HCT116 (cell line): ENCODE measurements at regions of chr11 and their contacts with region 1.

Region 1: DNA sequence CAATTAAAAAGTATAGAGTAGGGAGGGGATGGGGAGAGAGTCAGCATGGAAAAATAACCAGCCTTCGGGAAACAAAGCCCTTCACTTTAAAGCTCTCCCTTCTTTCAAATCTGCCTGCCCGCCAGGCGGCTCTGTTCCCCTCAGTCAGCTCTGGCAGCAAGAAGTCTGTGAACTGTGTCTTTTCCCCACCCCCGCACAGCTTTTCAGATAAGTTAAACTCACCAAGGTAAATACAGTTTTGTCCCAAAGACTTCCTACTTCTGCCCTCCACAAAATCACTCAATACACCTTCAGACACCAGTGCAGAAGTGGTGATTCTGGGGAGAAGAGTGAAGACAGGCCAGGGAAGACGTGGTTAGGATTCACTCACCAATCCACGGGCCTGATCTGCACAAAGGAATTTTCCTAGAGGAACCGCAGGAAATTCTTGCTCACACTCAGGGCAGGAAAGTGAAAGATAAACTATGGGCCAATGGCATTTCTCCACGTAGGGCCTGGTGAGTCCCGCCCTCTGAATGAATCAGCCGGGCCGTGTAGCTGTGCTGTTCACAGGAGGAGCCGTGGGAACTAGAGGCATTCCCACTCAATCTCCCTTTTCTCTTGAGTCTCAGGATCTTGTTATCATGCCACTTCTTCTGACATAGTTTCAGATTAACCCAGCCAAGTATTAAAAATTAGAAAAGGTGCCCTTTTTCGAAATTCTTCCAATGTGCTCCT is at the start of gene TRIM5:
- DNase-seq: peak; percentile 92
- ATAC-seq: peak; percentile 98
- H3K4me3 ChIP-seq: peak within 1 kb of the TSS; percentile 34 to 63
- H3K27ac ChIP-seq: peak within 1 kb of the TSS; percentile 76
- H3K4me1 ChIP-seq: peaks cover 4 to 13% of the 10 kb centered on the region in 2 experiments; a peak in 2 of 4 replicates
- H3K27me3 ChIP-seq: no peaks in the 10 kb centered on the region
- CTCF ChIP-seq: peak; percentile 60 to 66 (median 61); a peak in 5 of 6 replicates
- POLR2A ChIP-seq: no peak
- RAD21 ChIP-seq: peak; percentile 59
- total RNA-seq, gene TRIM5: 13.7 TPM

Region 2: GRCh38 chr11:5992604-5993251 is 307.9 kb after region 1 on chr11:
- CTCF ChIA-PET with region 1: no interaction called
- POLR2A ChIA-PET with region 1: no interaction called
- RAD21 ChIA-PET with region 1: no interaction called
- intact Hi-C with region 1: no loop called
- DNase-seq: peak; percentile 13
- ATAC-seq: peak; percentile 82
- H3K4me3 ChIP-seq: no peak overlapping the region
- H3K27ac ChIP-seq: no peak overlapping the region
- H3K4me1 ChIP-seq: no peaks in the 10 kb centered on the region
- H3K27me3 ChIP-seq: peaks cover 42% of the 10 kb centered on the region
- CTCF ChIP-seq: peak; percentile 38 to 73 (median 66); a peak in 5 of 6 replicates
- POLR2A ChIP-seq: no peak
- RAD21 ChIP-seq: peak; percentile 30; the same call in 1 of the 2 replicates

Region 3: GRCh38 chr11:6315811-6316425 is 631.1 kb after region 1 on chr11:
- CTCF ChIA-PET with region 1: no interaction called
- POLR2A ChIA-PET with region 1: no interaction called
- RAD21 ChIA-PET with region 1: no interaction called
- intact Hi-C with region 1: loop called (anchors 10 kb)
- DNase-seq: peak; percentile 41
- ATAC-seq: peak; percentile 69
- H3K4me3 ChIP-seq: no peak overlapping the region
- H3K27ac ChIP-seq: no peak overlapping the region
- H3K4me1 ChIP-seq: peaks cover 14 to 27% of the 10 kb centered on the region in 2 experiments
- H3K27me3 ChIP-seq: no peaks in the 10 kb centered on the region
- CTCF ChIP-seq: peak; percentile 84 to 95 (median 93); a peak in 5 of 6 replicates
- POLR2A ChIP-seq: no peak
- RAD21 ChIP-seq: peak; percentile 81